HepG2 (cell line): ENCODE measurements at regions of chr7 and their contacts with region 1.

Region 1: DNA sequence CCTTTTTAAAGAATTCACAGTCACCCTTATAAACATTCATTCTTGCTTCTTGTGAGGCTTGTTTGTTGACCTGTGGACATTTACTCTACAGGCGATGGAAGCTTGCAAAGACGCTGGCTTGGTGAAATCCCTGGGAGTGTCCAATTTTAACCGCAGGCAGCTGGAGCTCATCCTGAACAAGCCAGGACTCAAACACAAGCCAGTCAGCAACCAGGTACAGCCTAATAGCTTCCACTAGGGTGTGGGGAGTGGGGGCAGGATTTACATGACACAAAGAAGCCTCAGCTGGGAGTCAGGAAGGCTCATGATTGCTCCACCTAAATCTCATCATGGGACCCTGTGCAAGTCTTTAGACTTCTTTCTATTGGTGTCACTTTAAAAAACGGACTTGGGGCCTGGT is 29.0 kb downstream of the AKR1D1 start:
- DNase-seq: no peak
- ATAC-seq: no peak
- H3K4me3 ChIP-seq: no peak overlapping the region
- H3K27ac ChIP-seq: no peak overlapping the region
- H3K4me1 ChIP-seq: peaks cover under 1% of the 10 kb centered on the region; the same call in 1 of the 2 replicates
- H3K27me3 ChIP-seq: no peaks in the 10 kb centered on the region
- CTCF ChIP-seq: no peak
- EP300 ChIP-seq: no peak
- POLR2A ChIP-seq: no peak
- RAD21 ChIP-seq: no peak

Region 2: DNA sequence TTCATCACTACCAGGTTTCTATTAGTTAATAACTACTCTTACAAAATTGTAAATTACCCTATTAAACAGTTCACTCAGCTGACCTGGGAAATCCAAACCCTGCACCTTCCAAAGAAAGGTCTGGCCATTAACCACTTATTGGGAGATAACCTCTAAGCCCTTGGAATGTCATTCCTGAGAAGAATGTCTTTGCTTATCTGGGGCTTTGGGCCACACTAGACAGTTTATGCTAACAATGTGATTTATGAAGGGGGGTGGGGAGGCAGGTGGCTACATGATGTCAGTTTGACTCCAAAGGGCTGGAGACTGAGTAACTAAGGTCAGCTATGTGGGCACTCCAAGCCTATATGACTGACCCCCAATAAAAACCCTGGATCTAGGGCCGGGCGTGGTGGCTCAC is 21.7 kb after region 1 on chr7:
- CTCF ChIA-PET with region 1: no interaction called
- POLR2A ChIA-PET with region 1: no interaction called
- in situ Hi-C with region 1: no loop called
- intact Hi-C with region 1: loop called (anchors 1 kb)
- DNase-seq: no peak
- ATAC-seq: no peak
- H3K4me3 ChIP-seq: no peak overlapping the region
- H3K27ac ChIP-seq: no peak overlapping the region
- H3K4me1 ChIP-seq: peaks cover 22% of the 10 kb centered on the region
- H3K27me3 ChIP-seq: no peaks in the 10 kb centered on the region
- CTCF ChIP-seq: no peak
- EP300 ChIP-seq: no peak
- POLR2A ChIP-seq: no peak
- RAD21 ChIP-seq: no peak